ENCODE measurements at regions of chr5 and their contacts with region 1.

Region 1: GRCh38 chr5:175729829-175730277 is 72.0 kb downstream of the HRH2 start:
- DNase-seq: peak; percentile 92
- H3K4me3 ChIP-seq: peak overlapping the region; percentile 23 to 39; a peak in 2 of 4 replicates
- H3K27ac ChIP-seq: no peak overlapping the region
- H3K4me1 ChIP-seq: peaks cover 0 to 8% of the 10 kb centered on the region in 2 experiments; a peak in 1 of 4 replicates
- H3K27me3 ChIP-seq: no peaks in the 10 kb centered on the region
- CTCF ChIP-seq: peak; percentile 97
- EP300 ChIP-seq: no peak
- RAD21 ChIP-seq: peak; percentile 99

Region 2: DNA sequence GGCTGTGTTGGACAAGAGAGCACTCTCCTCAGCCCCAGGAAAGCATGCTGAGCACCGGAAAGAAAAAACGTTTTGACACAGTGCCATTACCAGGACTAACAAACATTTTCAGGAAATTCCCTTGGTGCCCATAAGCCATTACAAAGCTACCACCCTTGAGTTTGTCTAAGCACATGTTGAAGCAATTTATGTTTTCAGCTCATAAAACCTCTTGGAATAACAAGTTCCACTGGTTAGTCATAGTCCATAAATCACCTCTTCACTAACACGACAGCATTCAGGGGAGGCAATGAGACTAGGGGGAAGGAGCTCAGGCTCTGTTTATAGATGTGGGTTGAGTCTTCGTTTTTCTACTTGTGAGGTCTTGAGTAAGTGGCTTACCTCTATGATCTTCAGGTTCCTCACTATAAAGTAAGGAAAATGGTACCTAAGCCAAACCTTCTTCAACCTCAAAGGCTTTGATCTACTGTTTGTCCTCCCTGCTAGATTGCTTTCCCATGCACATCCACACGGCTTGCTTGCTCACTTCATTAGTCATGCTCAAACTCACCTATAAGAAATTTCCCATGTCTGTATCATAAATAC is 351.3 kb before region 1 on chr5:
- CTCF ChIA-PET with region 1: no interaction called
- POLR2A ChIA-PET with region 1: no interaction called
- DNase-seq: no peak
- H3K4me3 ChIP-seq: no peak overlapping the region
- H3K27ac ChIP-seq: no peak overlapping the region
- H3K4me1 ChIP-seq: no peaks in the 10 kb centered on the region
- H3K27me3 ChIP-seq: no peaks in the 10 kb centered on the region
- CTCF ChIP-seq: no peak
- EP300 ChIP-seq: no peak
- RAD21 ChIP-seq: no peak

Region 3: GRCh38 chr5:175526691-175527090 is 203.2 kb before region 1 on chr5:
- CTCF ChIA-PET with region 1: interaction called, 43 read pairs
- POLR2A ChIA-PET with region 1: no interaction called
- DNase-seq: no peak
- H3K4me3 ChIP-seq: no peak overlapping the region
- H3K27ac ChIP-seq: no peak overlapping the region
- H3K4me1 ChIP-seq: no peaks in the 10 kb centered on the region
- H3K27me3 ChIP-seq: no peaks in the 10 kb centered on the region
- CTCF ChIP-seq: no peak
- EP300 ChIP-seq: no peak
- RAD21 ChIP-seq: no peak

Region 4: DNA sequence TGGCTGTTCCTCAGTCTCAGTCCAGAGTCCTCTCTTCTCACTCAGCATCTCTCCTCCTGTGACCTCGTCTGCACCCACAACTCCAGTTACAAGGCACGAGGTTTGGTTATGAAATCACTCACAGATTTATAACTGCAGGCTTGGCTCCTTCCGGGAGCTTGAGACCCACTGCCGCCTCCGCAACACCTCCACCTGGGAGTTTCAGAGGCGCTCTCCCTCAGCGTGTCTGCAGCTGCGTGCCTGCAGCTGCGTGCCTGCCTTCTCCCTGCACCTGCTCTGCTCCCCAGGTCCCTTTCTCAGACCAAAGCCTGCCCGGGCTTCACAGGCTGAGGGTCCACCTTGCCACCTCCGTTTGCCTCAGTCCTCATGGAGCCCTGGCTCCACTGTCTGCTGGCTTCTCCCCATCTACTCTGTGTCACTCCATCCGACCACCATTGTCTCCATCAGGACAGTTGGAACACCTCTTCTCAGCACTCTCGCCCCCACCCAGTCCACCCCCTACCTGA is 20.5 kb before region 1 on chr5:
- CTCF ChIA-PET with region 1: interaction called, 10 read pairs
- POLR2A ChIA-PET with region 1: no interaction called
- DNase-seq: no peak
- H3K4me3 ChIP-seq: no peak overlapping the region
- H3K27ac ChIP-seq: no peak overlapping the region
- H3K4me1 ChIP-seq: peaks cover 0 to 9% of the 10 kb centered on the region in 2 experiments; a peak in 1 of 4 replicates
- H3K27me3 ChIP-seq: no peaks in the 10 kb centered on the region
- CTCF ChIP-seq: no peak
- EP300 ChIP-seq: no peak
- RAD21 ChIP-seq: no peak

Region 5: GRCh38 chr5:175752826-175753535 is 23.1 kb after region 1 on chr5:
- CTCF ChIA-PET with region 1: interaction called, 60 read pairs
- POLR2A ChIA-PET with region 1: no interaction called
- DNase-seq: no peak
- H3K4me3 ChIP-seq: no peak overlapping the region
- H3K27ac ChIP-seq: no peak overlapping the region
- H3K4me1 ChIP-seq: peaks cover 0 to 8% of the 10 kb centered on the region in 2 experiments; a peak in 1 of 4 replicates
- H3K27me3 ChIP-seq: no peaks in the 10 kb centered on the region
- CTCF ChIP-seq: no peak
- EP300 ChIP-seq: no peak
- RAD21 ChIP-seq: no peak

Region 6: DNA sequence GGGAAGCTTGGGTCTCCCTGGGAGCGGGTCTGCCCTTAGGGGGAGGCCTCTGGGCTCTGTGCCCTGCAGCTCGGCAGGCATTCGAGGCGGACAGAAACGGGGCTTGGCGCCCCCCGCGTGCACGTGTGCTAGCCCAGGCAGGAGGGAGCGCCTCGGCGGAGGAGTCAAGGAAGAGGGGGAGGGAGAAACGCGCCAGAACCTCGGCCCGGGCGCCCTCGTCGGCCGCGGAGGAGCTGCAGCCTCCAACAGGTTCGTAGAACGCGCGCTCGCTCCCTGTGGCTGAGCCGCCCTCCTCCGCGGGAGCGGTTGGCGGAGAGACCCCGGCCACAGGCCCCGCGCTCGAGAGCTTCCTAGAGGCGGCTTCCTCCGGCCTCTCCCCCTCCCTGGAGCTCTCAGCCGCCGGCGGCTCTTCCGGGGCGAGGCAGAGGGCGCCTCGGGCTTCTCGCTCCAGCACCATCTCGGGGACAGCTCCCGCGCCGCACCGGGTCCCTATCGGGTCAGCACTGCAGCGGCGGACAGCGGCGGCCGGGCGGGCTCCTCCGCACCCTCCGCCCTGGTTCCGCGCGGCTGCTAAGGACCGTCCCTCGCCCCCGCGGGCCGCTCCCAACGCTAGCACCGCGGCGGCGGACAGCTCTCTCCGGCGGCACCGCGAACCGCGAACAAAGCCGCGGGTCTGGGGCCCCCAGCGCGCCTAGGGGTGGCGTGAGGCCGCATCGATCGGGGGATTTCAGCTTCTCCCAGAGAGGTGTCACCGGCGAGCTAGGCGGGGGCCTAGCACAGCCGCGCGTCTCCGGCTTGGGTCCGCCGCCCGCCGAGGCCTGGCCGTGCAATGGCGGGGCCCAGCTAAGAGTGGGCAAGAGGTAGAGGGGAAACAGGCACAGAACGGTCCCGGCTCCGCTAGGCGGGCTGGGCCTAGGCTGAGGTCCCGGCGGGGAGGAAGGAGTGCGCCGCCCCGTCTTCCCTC is 67.0 kb after region 1 on chr5:
- CTCF ChIA-PET with region 1: interaction called, 40 read pairs
- POLR2A ChIA-PET with region 1: interaction called, 3 read pairs
- DNase-seq: peak; percentile 80
- H3K4me3 ChIP-seq: peak overlapping the region; percentile 47 to 57
- H3K27ac ChIP-seq: peak overlapping the region in 1 of 2 experiments; percentile 92; a peak in 2 of 4 replicates
- H3K4me1 ChIP-seq: peaks cover 0 to 27% of the 10 kb centered on the region in 2 experiments; a peak in 2 of 4 replicates
- H3K27me3 ChIP-seq: peaks cover 6% of the 10 kb centered on the region; the same call in 1 of the 2 replicates
- CTCF ChIP-seq: no peak
- EP300 ChIP-seq: no peak
- RAD21 ChIP-seq: no peak

Region 7: GRCh38 chr5:175867587-175868347 is 137.9 kb after region 1 on chr5:
- CTCF ChIA-PET with region 1: interaction called, 338 read pairs
- POLR2A ChIA-PET with region 1: interaction called, 3 read pairs
- DNase-seq: peak; percentile 85
- H3K4me3 ChIP-seq: no peak overlapping the region
- H3K27ac ChIP-seq: peak overlapping the region in 1 of 2 experiments; percentile 43; a peak in 2 of 4 replicates
- H3K4me1 ChIP-seq: peaks cover 0 to 21% of the 10 kb centered on the region in 2 experiments; a peak in 1 of 4 replicates
- H3K27me3 ChIP-seq: no peaks in the 10 kb centered on the region
- CTCF ChIP-seq: peak; percentile 22
- EP300 ChIP-seq: peak in 1 of 2 experiments; percentile 15; a peak in 1 of 4 replicates
- RAD21 ChIP-seq: peak; percentile 75

Region 8: DNA sequence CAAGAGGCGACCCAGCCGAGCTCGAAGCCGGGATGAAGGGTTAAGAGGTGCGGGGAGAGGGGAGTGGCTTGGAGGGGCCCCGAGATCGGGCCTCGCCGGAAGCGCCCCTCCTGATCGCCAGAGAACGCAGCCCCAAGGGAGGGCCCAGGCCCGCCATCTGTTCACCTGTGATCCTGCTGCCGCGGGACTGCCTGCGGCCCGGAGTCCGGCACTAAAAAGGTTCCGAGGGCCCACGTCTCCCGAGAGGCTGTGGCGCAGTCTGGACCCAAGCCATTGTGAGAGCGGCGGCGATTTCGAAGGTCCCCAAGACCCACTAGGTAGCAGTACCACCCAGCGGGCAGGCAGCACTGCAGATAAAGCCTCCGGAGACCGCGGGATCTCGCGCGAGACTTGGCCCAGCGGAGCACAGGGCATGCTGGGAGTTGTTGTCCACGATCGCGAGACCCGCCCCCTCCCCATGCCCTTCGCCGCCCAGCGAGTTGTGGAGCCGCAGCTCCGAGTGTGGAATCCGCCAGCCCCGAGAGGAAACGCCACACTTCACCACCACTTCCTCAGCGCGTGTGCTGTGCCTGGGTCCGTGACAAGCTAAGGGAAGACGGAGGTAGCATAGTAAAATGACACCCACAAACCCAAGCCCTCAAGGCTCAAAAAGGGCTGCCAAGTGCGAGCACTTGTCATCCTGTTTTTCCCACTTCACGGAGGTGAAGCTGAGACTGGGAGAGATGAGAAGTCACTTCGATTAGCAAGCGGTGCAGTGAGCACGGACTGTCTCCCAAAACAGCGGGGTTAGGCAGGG is 631.8 kb after region 1 on chr5 and contains the start of gene KIAA1191:
- CTCF ChIA-PET with region 1: interaction called, 10 read pairs
- POLR2A ChIA-PET with region 1: no interaction called
- DNase-seq: peak; percentile 92
- H3K4me3 ChIP-seq: peak within 1 kb of the TSS; percentile 80 to 98
- H3K27ac ChIP-seq: peak within 1 kb of the TSS; percentile 50 to 80; a peak in 3 of 4 replicates
- H3K4me1 ChIP-seq: peaks cover 0 to 18% of the 10 kb centered on the region in 2 experiments; a peak in 1 of 4 replicates
- H3K27me3 ChIP-seq: no peaks in the 10 kb centered on the region
- CTCF ChIP-seq: peak; percentile 30
- EP300 ChIP-seq: no peak; a peak in 1 of 4 replicates
- RAD21 ChIP-seq: peak; percentile 34
- polyA plus RNA-seq, gene KIAA1191: 100 and 127 TPM in 2 replicates